ENCODE measurements at regions of chr7 and their contacts with region 1.

Region 1: GRCh38 chr7:140696680-140697446 is at the start of gene NDUFB2:
- DNase-seq: peak; percentile 86 to 93
- H3K4me3 ChIP-seq: peak within 1 kb of the TSS; percentile 87
- H3K4me3 Mint-ChIP-seq: peak within 1 kb of the TSS; percentile 95
- H3K27ac Mint-ChIP-seq: peak within 1 kb of the TSS; percentile 94
- H3K4me1 ChIP-seq: 0 out of 2 replicates have a peak, but pooled peaks cover 3% of the 10 kb centered on the region
- H3K4me1 Mint-ChIP-seq: peaks cover 11% of the 10 kb centered on the region
- H3K27me3 ChIP-seq: no peaks in the 10 kb centered on the region
- H3K27me3 Mint-ChIP-seq: no peaks in the 10 kb centered on the region
- CTCF ChIP-seq: no peak
- total RNA-seq, gene NDUFB2: 166 and 188 TPM in 2 replicates

Region 2: GRCh38 chr7:140673063-140673773 is 23.6 kb before region 1 on chr7:
- CTCF ChIA-PET with region 1: interaction called, 7 read pairs
- POLR2A ChIA-PET with region 1: no interaction called
- intact Hi-C with region 1: loop called (anchors 2 kb)
- DNase-seq: peak; percentile 68 to 72
- H3K4me3 ChIP-seq: peak overlapping the region; percentile 86
- H3K4me3 Mint-ChIP-seq: peak overlapping the region; percentile 81
- H3K27ac Mint-ChIP-seq: peak overlapping the region; percentile 31
- H3K4me1 ChIP-seq: 0 out of 2 replicates have a peak, but pooled peaks cover 3% of the 10 kb centered on the region
- H3K4me1 Mint-ChIP-seq: peaks cover 6% of the 10 kb centered on the region
- H3K27me3 ChIP-seq: no peaks in the 10 kb centered on the region
- H3K27me3 Mint-ChIP-seq: no peaks in the 10 kb centered on the region
- CTCF ChIP-seq: no peak

Region 3: DNA sequence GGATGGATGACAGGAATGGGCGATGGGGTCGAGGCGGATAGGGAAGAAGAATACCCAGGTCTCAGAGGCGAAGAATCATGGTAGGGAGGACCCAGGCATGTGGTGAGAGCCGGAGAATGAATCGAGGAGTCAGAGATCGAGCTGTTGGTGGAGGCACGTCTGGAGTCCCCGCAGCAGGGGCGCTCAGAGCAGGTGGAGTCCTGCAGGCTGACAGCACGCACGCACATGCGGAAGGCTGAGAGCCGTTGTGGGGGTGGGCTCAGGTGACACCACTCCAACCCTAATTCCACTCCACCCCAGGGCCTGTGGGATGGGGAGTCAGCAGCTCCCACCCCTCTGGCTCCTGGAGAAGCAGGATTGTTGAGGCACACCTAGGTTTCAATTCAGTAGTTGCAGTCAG is 12.4 kb before region 1 on chr7:
- CTCF ChIA-PET with region 1: no interaction called
- POLR2A ChIA-PET with region 1: interaction called, 14 read pairs
- intact Hi-C with region 1: no loop called
- DNase-seq: no peak
- H3K4me3 ChIP-seq: no peak overlapping the region
- H3K4me3 Mint-ChIP-seq: no peak overlapping the region
- H3K27ac Mint-ChIP-seq: peak overlapping the region; percentile 36
- H3K4me1 ChIP-seq: 0 out of 2 replicates have a peak, but pooled peaks cover 5% of the 10 kb centered on the region
- H3K4me1 Mint-ChIP-seq: peaks cover 11% of the 10 kb centered on the region
- H3K27me3 ChIP-seq: no peaks in the 10 kb centered on the region
- H3K27me3 Mint-ChIP-seq: no peaks in the 10 kb centered on the region
- CTCF ChIP-seq: no peak

Measured in Caco-2 (cell line).